ENCODE measurements at regions of chr18 and their contacts with region 1.

Region 1: GRCh38 chr18:74334242-74334893 is 18.7 kb downstream of the C18orf63 start:
- DNase-seq: peak; percentile 72
- ATAC-seq: peak; percentile 88
- H3K4me3 ChIP-seq: no peak overlapping the region
- H3K4me3 Mint-ChIP-seq: peak overlapping the region; percentile 61
- H3K27ac ChIP-seq: peak overlapping the region; percentile 51 to 78
- H3K27ac Mint-ChIP-seq: peak overlapping the region; percentile 92
- H3K4me1 ChIP-seq: peaks cover 22 to 24% of the 10 kb centered on the region in 2 donors
- H3K4me1 Mint-ChIP-seq: peaks cover 45% of the 10 kb centered on the region
- H3K27me3 ChIP-seq: no peaks in the 10 kb centered on the region
- H3K27me3 Mint-ChIP-seq: no peaks in the 10 kb centered on the region
- CTCF ChIP-seq: no peak

Region 2: GRCh38 chr18:72774914-72775313 is 1559.5 kb before region 1 on chr18:
- CTCF ChIA-PET with region 1: no interaction called
- POLR2A ChIA-PET with region 1: no interaction called
- intact Hi-C with region 1: no loop called
- DNase-seq: no peak
- ATAC-seq: no peak
- H3K4me3 ChIP-seq: no peak overlapping the region
- H3K4me3 Mint-ChIP-seq: no peak overlapping the region
- H3K27ac ChIP-seq: no peak overlapping the region
- H3K27ac Mint-ChIP-seq: no peak overlapping the region
- H3K4me1 ChIP-seq: no peaks in the 10 kb centered on the region
- H3K4me1 Mint-ChIP-seq: no peaks in the 10 kb centered on the region
- H3K27me3 ChIP-seq: no peaks in the 10 kb centered on the region
- H3K27me3 Mint-ChIP-seq: peaks cover 3% of the 10 kb centered on the region
- CTCF ChIP-seq: no peak

Region 3: GRCh38 chr18:74281639-74282358 is 52.6 kb before region 1 on chr18:
- CTCF ChIA-PET with region 1: no interaction called
- POLR2A ChIA-PET with region 1: no interaction called
- intact Hi-C with region 1: loop called (anchors 2 kb)
- DNase-seq: no peak
- ATAC-seq: no peak
- H3K4me3 ChIP-seq: no peak overlapping the region
- H3K4me3 Mint-ChIP-seq: peak overlapping the region; percentile 23
- H3K27ac ChIP-seq: no peak overlapping the region
- H3K27ac Mint-ChIP-seq: peak overlapping the region; percentile 43
- H3K4me1 ChIP-seq: peaks cover 5 to 19% of the 10 kb centered on the region in 2 donors
- H3K4me1 Mint-ChIP-seq: peaks cover 51% of the 10 kb centered on the region
- H3K27me3 ChIP-seq: no peaks in the 10 kb centered on the region
- H3K27me3 Mint-ChIP-seq: no peaks in the 10 kb centered on the region
- CTCF ChIP-seq: no peak

Region 4: GRCh38 chr18:74303936-74304335 is 30.4 kb before region 1 on chr18:
- CTCF ChIA-PET with region 1: no interaction called
- POLR2A ChIA-PET with region 1: no interaction called
- intact Hi-C with region 1: no loop called
- DNase-seq: no peak
- ATAC-seq: no peak
- H3K4me3 ChIP-seq: no peak overlapping the region
- H3K4me3 Mint-ChIP-seq: no peak overlapping the region
- H3K27ac ChIP-seq: no peak overlapping the region
- H3K27ac Mint-ChIP-seq: no peak overlapping the region
- H3K4me1 ChIP-seq: no peaks in the 10 kb centered on the region
- H3K4me1 Mint-ChIP-seq: no peaks in the 10 kb centered on the region
- H3K27me3 ChIP-seq: peaks cover 0 to 4% (median 0%) of the 10 kb centered on the region in 4 experiments
- H3K27me3 Mint-ChIP-seq: peaks cover 18% of the 10 kb centered on the region
- CTCF ChIP-seq: no peak

Region 5: DNA sequence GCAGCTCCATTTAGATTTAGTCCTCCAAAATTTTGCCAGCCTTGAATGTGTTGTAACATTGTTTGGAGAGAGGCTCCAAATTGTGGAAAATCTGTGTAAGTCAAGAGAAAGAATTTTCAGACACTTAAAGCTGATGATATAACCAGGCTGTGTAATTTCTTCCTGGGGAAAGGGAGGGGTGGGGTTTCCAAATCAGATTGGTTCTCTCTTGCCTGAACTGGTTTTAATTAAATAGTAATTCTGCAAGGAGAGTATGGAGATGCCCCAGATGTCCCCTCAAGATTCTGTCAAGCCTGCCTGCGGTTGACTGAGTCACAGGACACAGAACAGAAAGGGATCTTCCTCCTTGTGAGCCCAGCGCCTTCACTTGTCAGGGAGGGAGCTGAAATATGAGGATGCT is 35.7 kb after region 1 on chr18:
- CTCF ChIA-PET with region 1: no interaction called
- POLR2A ChIA-PET with region 1: no interaction called
- intact Hi-C with region 1: no loop called
- DNase-seq: no peak
- ATAC-seq: no peak
- H3K4me3 ChIP-seq: no peak overlapping the region
- H3K4me3 Mint-ChIP-seq: no peak overlapping the region
- H3K27ac ChIP-seq: no peak overlapping the region
- H3K27ac Mint-ChIP-seq: no peak overlapping the region
- H3K4me1 ChIP-seq: no peaks in the 10 kb centered on the region
- H3K4me1 Mint-ChIP-seq: no peaks in the 10 kb centered on the region
- H3K27me3 ChIP-seq: peaks cover 0 to 6% (median 0%) of the 10 kb centered on the region in 4 experiments
- H3K27me3 Mint-ChIP-seq: peaks cover 13% of the 10 kb centered on the region
- CTCF ChIP-seq: no peak

Region 6: GRCh38 chr18:75290737-75291358 is 956.5 kb after region 1 on chr18:
- CTCF ChIA-PET with region 1: no interaction called
- POLR2A ChIA-PET with region 1: no interaction called
- intact Hi-C with region 1: no loop called
- DNase-seq: no peak
- ATAC-seq: no peak
- H3K4me3 ChIP-seq: no peak overlapping the region
- H3K4me3 Mint-ChIP-seq: no peak overlapping the region
- H3K27ac ChIP-seq: no peak overlapping the region
- H3K27ac Mint-ChIP-seq: no peak overlapping the region
- H3K4me1 ChIP-seq: no peaks in the 10 kb centered on the region
- H3K4me1 Mint-ChIP-seq: no peaks in the 10 kb centered on the region
- H3K27me3 ChIP-seq: no peaks in the 10 kb centered on the region
- H3K27me3 Mint-ChIP-seq: no peaks in the 10 kb centered on the region
- CTCF ChIP-seq: no peak